Heart left ventricle (tissue), 16 donors: ENCODE measurements at regions of chr15 and their contacts with region 1.

Region 1: GRCh38 chr15:67575039-67575502 is 32.6 kb downstream of the MAP2K5 start:
- DNase-seq: no peak
- ATAC-seq: peak in 2 of 4 donors; percentile 43 to 50
- H3K4me3 ChIP-seq: no peak overlapping the region
- H3K27ac ChIP-seq: no peak overlapping the region
- H3K4me1 ChIP-seq: peaks cover 0 to 15% (median 2%) of the 10 kb centered on the region in 12 donors
- H3K27me3 ChIP-seq: no peaks in the 10 kb centered on the region
- CTCF ChIP-seq: no peak
- POLR2A ChIP-seq: no peak

Region 2: DNA sequence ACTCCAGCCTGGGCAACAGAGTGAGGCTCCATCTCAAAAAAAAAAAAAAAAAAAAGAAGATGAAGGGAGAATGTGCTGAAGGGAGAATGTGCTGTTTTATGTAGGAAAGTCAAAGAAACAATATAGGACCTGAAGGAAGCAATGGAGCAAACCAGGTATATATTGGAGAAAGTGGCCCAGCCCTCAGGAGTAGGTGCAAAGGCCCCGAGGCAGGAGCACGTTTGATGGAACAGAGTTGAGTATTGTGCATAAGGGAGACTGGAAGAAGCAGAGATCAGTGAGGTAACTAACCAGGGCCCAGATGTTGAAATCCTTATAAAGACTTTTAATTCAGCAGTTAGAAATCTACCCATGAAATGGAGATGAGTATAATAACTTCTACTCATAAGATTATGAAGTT is 47.0 kb after region 1 on chr15:
- intact Hi-C with region 1: loop called in 1 of 10 experiments (anchors 10 kb)
- DNase-seq: no peak
- ATAC-seq: no peak
- H3K4me3 ChIP-seq: no peak overlapping the region
- H3K27ac ChIP-seq: no peak overlapping the region
- H3K4me1 ChIP-seq: no peaks in the 10 kb centered on the region
- H3K27me3 ChIP-seq: no peaks in the 10 kb centered on the region
- CTCF ChIP-seq: no peak
- POLR2A ChIP-seq: no peak

Region 3: DNA sequence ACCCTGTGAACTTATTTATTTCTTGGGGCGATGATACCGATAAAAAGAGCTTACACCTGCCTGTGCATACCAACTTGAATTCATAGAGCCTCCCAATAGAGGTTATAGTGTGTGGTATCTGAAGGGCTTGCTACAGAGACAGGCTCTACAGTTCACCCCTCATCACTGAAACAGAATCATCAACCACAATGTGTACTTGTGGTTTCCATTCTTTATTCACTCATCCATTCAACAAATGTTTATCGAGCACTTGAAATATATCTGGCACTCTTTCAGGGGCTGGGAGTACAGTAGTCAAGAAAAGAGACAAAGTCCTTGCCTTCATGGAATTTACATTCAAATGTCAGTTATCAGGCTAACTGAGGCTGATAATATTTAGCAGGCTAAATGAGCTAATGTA is 115.9 kb after region 1 on chr15:
- intact Hi-C with region 1: no loop called
- DNase-seq: no peak
- ATAC-seq: no peak
- H3K4me3 ChIP-seq: no peak overlapping the region
- H3K27ac ChIP-seq: no peak overlapping the region
- H3K4me1 ChIP-seq: no peaks in the 10 kb centered on the region
- H3K27me3 ChIP-seq: no peaks in the 10 kb centered on the region
- CTCF ChIP-seq: no peak
- POLR2A ChIP-seq: no peak